Left cardiac atrium (tissue), 4 donors: ENCODE measurements at regions of chr9 and their contacts with region 1.

Region 1: GRCh38 chr9:68427216-68427977 is 71.0 kb downstream of the PGM5 start:
- DNase-seq: peak; percentile 23
- ATAC-seq: peak; percentile 73 to 75

Region 2: DNA sequence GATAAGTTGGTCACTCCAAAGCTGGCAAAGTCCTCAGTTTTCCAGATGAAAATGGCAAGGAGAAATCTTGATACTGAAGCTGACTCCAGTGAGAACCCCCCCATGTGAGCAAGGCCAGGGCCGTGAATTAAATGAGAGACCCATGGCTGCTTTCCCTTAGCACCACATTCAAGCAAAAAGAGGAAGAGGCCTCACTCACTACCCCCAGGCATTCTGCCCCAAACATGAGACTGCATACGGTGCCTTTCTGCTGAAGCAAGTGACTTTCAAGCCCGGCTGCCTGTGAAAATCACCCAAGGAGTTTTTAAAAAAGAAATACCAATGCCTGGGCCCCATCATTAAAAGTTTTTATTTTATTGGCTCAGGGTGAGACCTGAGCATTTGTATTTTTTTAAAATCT is 46.4 kb after region 1 on chr9:
- intact Hi-C with region 1: loop called in 1 of 2 experiments (anchors 10 kb)
- DNase-seq: no peak
- ATAC-seq: no peak

Region 3: DNA sequence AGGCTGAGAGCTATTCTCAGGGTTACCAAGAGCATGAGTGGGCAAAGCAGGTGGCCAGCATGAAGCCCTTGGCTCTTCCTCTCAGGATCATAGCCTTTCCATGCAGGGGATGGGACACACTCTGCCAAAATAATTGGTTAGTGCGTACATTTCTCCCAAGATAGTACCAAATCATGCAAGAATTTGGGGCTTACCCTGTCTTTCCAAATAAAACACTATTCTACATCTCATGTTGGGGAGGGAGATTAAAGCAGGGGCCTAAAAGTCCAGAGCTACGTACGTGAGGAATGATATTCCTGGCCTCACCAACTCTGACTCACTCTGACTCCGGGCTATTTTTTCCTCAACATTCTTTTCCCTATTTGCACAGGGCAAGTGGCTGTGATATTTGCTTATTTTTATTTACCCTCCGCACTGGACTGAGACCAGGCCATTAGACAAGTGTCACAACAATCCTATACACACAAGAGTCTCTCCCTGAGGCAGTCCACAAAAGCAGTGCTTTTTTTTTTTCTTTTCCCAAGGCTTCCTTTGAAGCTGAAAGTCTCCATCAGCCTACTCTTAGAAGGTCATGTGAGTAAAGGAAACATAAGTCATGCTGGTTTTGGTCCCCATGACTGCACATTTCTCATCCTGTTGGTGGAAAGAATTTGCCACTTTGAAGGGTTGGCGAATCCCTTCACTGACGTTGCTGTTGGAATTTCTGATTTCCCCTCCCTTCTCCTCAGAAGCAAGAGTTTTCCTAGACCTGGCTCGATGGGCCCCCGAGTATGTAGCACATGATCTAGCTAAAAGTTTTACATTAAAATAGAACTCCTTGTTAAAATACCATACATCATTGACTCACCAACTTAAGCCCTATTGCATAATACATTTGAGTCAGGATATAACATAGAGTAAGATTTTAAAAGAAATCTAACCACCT is 73.3 kb after region 1 on chr9:
- intact Hi-C with region 1: no loop called
- DNase-seq: no peak
- ATAC-seq: peak; percentile 78 to 79